ENCODE measurements at regions of chr14 and their contacts with region 1.

Region 1: GRCh38 chr14:74231784-74232183 is 7.5 kb upstream of the VSX2 start:
- DNase-seq: no peak
- ATAC-seq: no peak
- H3K4me3 ChIP-seq: no peak overlapping the region
- H3K27ac ChIP-seq: no peak overlapping the region
- H3K4me1 ChIP-seq: no peaks in the 10 kb centered on the region
- CTCF ChIP-seq: no peak
- EP300 ChIP-seq: no peak
- POLR2A ChIP-seq: no peak
- RAD21 ChIP-seq: no peak

Region 2: DNA sequence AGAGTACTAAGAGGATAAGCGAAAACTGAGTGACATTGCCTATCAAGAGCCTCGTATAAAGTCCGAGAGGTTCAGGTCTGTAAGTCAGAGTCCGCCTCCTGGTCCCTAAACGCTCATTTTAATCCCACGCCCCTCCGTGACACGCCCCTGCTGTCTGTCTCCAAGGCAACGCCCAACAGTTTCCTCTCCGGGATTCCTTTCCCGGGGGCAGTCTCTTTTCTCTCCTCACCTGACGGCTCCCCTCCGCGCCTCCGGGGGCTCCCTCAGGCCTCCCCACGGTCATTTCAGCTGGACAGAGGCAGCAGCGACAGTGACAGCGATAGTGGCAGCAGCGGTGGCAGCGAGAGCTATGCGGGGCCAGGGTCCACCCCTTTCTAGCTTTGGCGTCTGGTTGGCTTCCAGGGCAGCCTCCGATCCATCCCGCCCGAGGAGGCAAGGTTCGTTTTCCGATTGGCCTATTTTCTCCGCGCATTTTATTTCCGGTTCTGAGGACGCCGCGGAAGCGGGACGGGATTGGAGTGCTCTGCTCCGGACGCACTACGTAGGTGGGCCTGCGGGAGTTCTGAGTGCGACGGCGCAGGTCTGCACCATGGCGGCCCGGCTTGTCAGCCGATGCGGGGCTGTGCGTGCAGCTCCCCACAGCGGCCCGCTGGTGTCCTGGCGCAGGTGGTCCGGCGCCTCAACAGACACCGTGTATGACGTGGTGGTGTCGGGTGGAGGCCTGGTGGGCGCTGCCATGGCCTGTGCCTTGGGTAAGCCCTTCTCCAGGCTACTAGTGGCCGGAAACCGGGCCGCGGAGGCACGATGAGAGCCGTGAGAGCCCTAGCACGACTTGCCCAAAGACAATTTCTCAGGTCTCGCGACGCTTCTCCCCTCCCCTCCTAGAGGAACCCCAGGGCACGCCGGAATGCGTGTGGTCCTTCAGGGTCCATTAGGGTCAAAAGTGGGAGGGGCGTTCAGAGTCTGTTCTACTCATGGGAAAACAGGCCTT is 281.7 kb before region 1 on chr14 and contains the starts of genes COQ6 and FAM161B:
- CTCF ChIA-PET with region 1: no interaction called
- POLR2A ChIA-PET with region 1: no interaction called
- DNase-seq: peak; percentile 89 to 97
- ATAC-seq: peak; percentile 97
- H3K4me3 ChIP-seq: peak within 1 kb of the TSS; percentile 68
- H3K27ac ChIP-seq: peak within 1 kb of the TSS; percentile 79 to 91
- H3K4me1 ChIP-seq: peaks cover 6% of the 10 kb centered on the region; the same call in 2 of the 3 replicates
- CTCF ChIP-seq: no peak
- EP300 ChIP-seq: no peak
- POLR2A ChIP-seq: peak; percentile 91
- RAD21 ChIP-seq: 0 out of 5 replicates have a peak, but pooled peaks of 1 of the 2 experiments have one; percentile 17
- polyA plus RNA-seq, gene COQ6: 41.9 and 46.4 TPM in 2 replicates
- polyA plus RNA-seq, gene FAM161B: 1.6 TPM in 2 replicates

Region 3: DNA sequence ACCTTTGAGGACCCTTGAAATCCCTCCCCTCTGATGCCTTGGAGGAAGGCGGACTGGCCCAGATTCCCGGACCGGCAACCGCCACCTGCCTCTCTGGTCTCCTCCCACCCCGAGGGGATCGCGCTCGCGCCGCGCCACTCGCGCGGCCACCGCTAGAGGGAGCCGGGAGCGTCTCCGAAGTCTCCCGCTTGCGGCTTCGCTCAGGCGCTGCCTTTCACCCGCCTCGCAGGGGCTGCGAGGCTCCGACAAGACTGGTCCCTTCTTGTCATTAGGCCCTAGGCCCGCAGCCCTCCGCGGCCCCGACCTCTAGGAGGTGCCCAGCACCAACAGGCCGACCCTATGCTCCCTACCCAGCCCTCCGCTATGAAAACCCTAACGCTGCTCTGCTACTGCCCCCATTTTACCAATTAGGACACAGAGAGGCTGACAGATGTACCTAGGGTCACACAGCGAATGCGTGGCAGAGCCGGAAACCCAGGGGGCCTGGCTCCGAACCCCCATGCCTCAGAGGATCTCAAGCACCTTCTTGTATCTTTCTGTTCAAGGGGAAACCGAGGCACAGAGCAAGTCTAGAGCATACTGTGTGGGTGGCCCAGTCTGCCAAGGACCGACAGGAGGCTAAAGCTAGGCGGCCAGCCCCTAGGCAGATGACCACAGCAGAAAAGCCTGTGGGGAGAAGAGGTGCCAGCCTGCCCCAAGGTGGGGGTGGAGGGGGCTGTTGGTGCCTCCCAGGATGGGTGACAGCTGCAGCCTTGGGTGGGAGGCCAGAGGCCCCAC is 13.9 kb before region 1 on chr14:
- CTCF ChIA-PET with region 1: interaction called, 18 read pairs
- POLR2A ChIA-PET with region 1: no interaction called
- DNase-seq: peak; percentile 69 to 90
- ATAC-seq: peak; percentile 95 to 98
- H3K4me3 ChIP-seq: peak overlapping the region; percentile 36
- H3K27ac ChIP-seq: 0 out of 6 replicates have a peak overlapping the region, but pooled peaks of 1 of the 2 experiments have one; percentile 24
- H3K4me1 ChIP-seq: no peaks in the 10 kb centered on the region
- CTCF ChIP-seq: peak; percentile 82
- EP300 ChIP-seq: no peak
- POLR2A ChIP-seq: no peak
- RAD21 ChIP-seq: peak; percentile 51 to 52; a peak in 4 of 5 replicates

Region 4: DNA sequence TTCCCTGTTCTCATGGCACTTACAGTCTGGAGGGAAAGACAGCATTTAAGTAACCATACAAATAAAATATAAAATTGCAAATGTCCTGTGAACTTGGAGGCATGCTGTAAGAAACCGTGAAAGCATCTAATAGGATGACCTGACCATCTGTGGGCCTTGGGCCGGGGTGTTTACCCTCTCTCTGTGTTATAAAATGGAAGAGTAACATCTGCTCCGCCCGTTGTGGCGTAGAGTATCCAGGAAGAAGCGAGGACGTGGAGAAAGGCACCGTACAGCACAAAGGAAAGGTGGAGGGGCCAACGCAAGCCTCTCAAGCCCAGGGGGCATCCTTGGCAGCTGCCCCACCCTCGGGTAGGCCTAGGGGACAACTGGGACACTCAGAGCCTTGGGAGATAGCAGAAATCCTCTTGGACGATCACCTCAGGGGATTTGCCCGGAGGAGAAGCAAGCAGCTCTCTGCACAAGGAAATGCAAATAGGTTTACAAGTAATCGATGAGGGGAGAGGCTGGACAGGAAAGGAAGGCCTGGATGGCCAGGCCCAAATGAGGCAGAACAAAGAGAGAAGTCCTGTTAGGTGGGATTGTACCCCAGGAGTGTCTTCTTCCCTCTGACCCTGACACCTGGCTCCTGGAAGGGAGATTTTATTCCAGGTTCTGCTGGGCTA is 33.6 kb after region 1 on chr14:
- CTCF ChIA-PET with region 1: no interaction called
- POLR2A ChIA-PET with region 1: no interaction called
- DNase-seq: no peak
- ATAC-seq: no peak
- H3K4me3 ChIP-seq: no peak overlapping the region
- H3K27ac ChIP-seq: no peak overlapping the region
- H3K4me1 ChIP-seq: peaks cover 7% of the 10 kb centered on the region
- CTCF ChIP-seq: no peak
- EP300 ChIP-seq: no peak
- POLR2A ChIP-seq: no peak
- RAD21 ChIP-seq: no peak